ENCODE measurements at regions of chr2 and their contacts with region 1.

Region 1: GRCh38 chr2:204948024-204948763 is 402.9 kb downstream of the PARD3B start:
- DNase-seq: no peak
- H3K4me3 Mint-ChIP-seq: peak overlapping the region; percentile 50
- H3K27ac Mint-ChIP-seq: peak overlapping the region; percentile 73
- H3K4me1 Mint-ChIP-seq: peaks cover 69% of the 10 kb centered on the region
- H3K27me3 Mint-ChIP-seq: no peaks in the 10 kb centered on the region

Region 2: GRCh38 chr2:204842661-204843485 is 105.3 kb before region 1 on chr2:
- intact Hi-C with region 1: no loop called
- DNase-seq: no peak
- H3K4me3 Mint-ChIP-seq: no peak overlapping the region
- H3K27ac Mint-ChIP-seq: no peak overlapping the region
- H3K4me1 Mint-ChIP-seq: peaks cover 27% of the 10 kb centered on the region
- H3K27me3 Mint-ChIP-seq: peaks cover 8% of the 10 kb centered on the region

Region 3: GRCh38 chr2:204860274-204860673 is 87.9 kb before region 1 on chr2:
- intact Hi-C with region 1: no loop called
- DNase-seq: no peak
- H3K4me3 Mint-ChIP-seq: no peak overlapping the region
- H3K27ac Mint-ChIP-seq: no peak overlapping the region
- H3K4me1 Mint-ChIP-seq: no peaks in the 10 kb centered on the region
- H3K27me3 Mint-ChIP-seq: peaks cover 33% of the 10 kb centered on the region

Region 4: GRCh38 chr2:204871231-204871953 is 76.8 kb before region 1 on chr2:
- intact Hi-C with region 1: loop called (anchors 2 kb)
- DNase-seq: no peak
- H3K4me3 Mint-ChIP-seq: no peak overlapping the region
- H3K27ac Mint-ChIP-seq: no peak overlapping the region
- H3K4me1 Mint-ChIP-seq: peaks cover 36% of the 10 kb centered on the region
- H3K27me3 Mint-ChIP-seq: peaks cover 17% of the 10 kb centered on the region

Region 5: GRCh38 chr2:204900910-204901309 is 47.3 kb before region 1 on chr2:
- intact Hi-C with region 1: loop called (anchors 5 kb)
- DNase-seq: no peak
- H3K4me3 Mint-ChIP-seq: peak overlapping the region; percentile 28
- H3K27ac Mint-ChIP-seq: peak overlapping the region; percentile 67
- H3K4me1 Mint-ChIP-seq: peaks cover 52% of the 10 kb centered on the region
- H3K27me3 Mint-ChIP-seq: no peaks in the 10 kb centered on the region

Region 6: DNA sequence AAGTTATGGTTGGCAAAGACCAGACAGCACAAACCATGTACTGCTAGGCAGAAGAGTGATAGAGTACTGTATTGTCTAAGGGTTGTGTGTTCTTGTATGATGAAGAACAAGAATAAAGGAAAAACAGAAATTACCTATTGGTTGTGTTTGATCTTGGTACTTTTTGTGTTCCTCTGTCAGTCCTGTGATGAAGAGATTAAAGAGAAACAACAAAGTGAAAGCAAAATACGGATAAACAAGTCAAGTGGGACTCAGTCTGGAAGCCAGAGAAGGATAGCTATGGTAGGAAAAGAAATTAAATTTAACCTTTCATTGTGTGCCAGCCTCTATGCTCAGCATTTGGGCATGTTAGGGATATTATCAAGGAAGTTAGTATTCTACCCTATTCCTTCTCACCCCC is 10.2 kb after region 1 on chr2:
- intact Hi-C with region 1: loop called (anchors 1 kb)
- DNase-seq: no peak
- H3K4me3 Mint-ChIP-seq: peak overlapping the region; percentile 77
- H3K27ac Mint-ChIP-seq: peak overlapping the region; percentile 68
- H3K4me1 Mint-ChIP-seq: peaks cover 31% of the 10 kb centered on the region
- H3K27me3 Mint-ChIP-seq: peaks cover 2% of the 10 kb centered on the region

Region 7: GRCh38 chr2:204967199-204967960 is 19.2 kb after region 1 on chr2:
- intact Hi-C with region 1: loop called (anchors 1 kb)
- DNase-seq: peak; percentile 63
- H3K4me3 Mint-ChIP-seq: peak overlapping the region; percentile 52
- H3K27ac Mint-ChIP-seq: peak overlapping the region; percentile 85
- H3K4me1 Mint-ChIP-seq: peaks cover 63% of the 10 kb centered on the region
- H3K27me3 Mint-ChIP-seq: peaks cover 1% of the 10 kb centered on the region

Region 8: GRCh38 chr2:204972606-204973336 is 24.6 kb after region 1 on chr2:
- intact Hi-C with region 1: loop called (anchors 1 kb)
- DNase-seq: no peak
- H3K4me3 Mint-ChIP-seq: no peak overlapping the region
- H3K27ac Mint-ChIP-seq: peak overlapping the region; percentile 49
- H3K4me1 Mint-ChIP-seq: peaks cover 38% of the 10 kb centered on the region
- H3K27me3 Mint-ChIP-seq: no peaks in the 10 kb centered on the region

Region 9: GRCh38 chr2:205024822-205025518 is 76.8 kb after region 1 on chr2:
- intact Hi-C with region 1: loop called (anchors 5 kb)
- DNase-seq: no peak
- H3K4me3 Mint-ChIP-seq: no peak overlapping the region
- H3K27ac Mint-ChIP-seq: peak overlapping the region; percentile 17
- H3K4me1 Mint-ChIP-seq: peaks cover 23% of the 10 kb centered on the region
- H3K27me3 Mint-ChIP-seq: peaks cover 2% of the 10 kb centered on the region